ENCODE measurements at regions of chr9 and their contacts with region 1.

Region 1: DNA sequence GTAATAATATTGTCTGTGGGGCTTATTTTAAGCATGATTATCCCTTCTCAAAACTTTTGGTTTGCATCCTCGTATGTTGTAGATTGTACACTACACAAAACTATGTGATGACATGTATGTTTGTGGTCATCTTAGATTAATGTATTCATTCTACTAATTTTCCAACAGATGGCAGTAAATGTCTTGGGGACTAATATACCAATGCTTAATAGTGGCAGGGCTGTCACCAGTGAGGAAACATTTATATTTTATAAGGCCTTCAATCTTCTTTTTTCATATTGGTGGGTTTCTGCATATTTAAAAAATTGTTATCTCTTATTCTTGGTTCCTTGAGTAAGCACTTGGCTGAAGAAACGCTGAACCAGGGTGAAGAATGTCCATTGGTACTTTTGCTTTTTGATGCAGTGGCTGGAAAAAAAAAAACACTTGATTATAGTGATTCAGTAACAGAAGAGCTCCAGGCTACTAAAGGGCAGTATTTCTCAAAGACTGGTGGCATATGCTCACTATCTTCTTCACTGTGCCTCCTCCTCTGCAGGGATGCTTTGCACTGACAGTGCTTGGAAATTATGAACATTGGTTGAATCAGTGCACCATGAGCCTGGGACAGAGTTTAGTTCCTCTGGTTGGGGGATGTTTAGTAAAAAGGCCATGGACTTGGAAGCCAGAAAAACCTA is 530.3 kb downstream of the RASEF start:
- DNase-seq: no peak
- H3K4me3 ChIP-seq: no peak overlapping the region
- H3K27ac ChIP-seq: no peak overlapping the region
- H3K4me1 ChIP-seq: no peaks in the 10 kb centered on the region
- H3K27me3 ChIP-seq: no peaks in the 10 kb centered on the region
- CTCF ChIP-seq: peak in 2 of 4 experiments; percentile 22 to 34
- EP300 ChIP-seq: no peak
- POLR2A ChIP-seq: no peak

Region 2: DNA sequence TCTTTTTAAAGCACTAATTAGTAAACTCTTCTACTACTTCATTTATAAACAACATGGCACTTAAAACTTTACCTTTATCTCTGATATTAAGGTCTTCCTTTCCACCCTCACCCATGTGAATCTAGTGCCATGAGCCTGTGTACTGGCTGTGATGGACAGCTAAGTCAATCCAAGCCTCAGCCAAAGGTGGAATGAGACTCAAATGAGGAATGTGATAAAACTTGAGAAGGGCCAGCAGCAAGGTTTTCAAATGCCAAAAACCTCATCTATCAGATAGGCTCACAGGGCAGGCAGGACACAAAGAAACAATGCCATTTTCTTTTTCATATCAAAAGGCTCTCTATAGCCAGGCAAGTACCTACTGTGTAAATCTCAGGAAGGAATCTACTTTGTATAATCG is 243.2 kb after region 1 on chr9:
- intact Hi-C with region 1: no loop called
- DNase-seq: no peak
- H3K4me3 ChIP-seq: no peak overlapping the region
- H3K27ac ChIP-seq: no peak overlapping the region
- H3K4me1 ChIP-seq: no peaks in the 10 kb centered on the region
- H3K27me3 ChIP-seq: no peaks in the 10 kb centered on the region
- CTCF ChIP-seq: no peak
- EP300 ChIP-seq: no peak
- POLR2A ChIP-seq: no peak

Region 3: GRCh38 chr9:82961504-82962125 is 429.0 kb after region 1 on chr9:
- intact Hi-C with region 1: loop called (anchors 5 kb)
- DNase-seq: peak; percentile 73
- H3K4me3 ChIP-seq: no peak overlapping the region
- H3K27ac ChIP-seq: no peak overlapping the region
- H3K4me1 ChIP-seq: no peaks in the 10 kb centered on the region
- H3K27me3 ChIP-seq: no peaks in the 10 kb centered on the region
- CTCF ChIP-seq: peak; percentile 16 to 73 (median 61)
- EP300 ChIP-seq: no peak
- POLR2A ChIP-seq: no peak

Measured in sigmoid colon (tissue), 7 donors.